ENCODE measurements at regions of chr12 and their contacts with region 1.

Region 1: GRCh38 chr12:116737774-116738700 is at the starts of genes RNFT2 and SPRING1:
- DNase-seq: peak; percentile 100
- H3K4me3 Mint-ChIP-seq: peak within 1 kb of the TSS; percentile 87
- H3K27ac Mint-ChIP-seq: peak within 1 kb of the TSS; percentile 89
- H3K4me1 Mint-ChIP-seq: peaks cover 13% of the 10 kb centered on the region
- H3K27me3 Mint-ChIP-seq: no peaks in the 10 kb centered on the region
- total RNA-seq, gene RNFT2: 10.1 and 11.6 TPM in 2 replicates
- total RNA-seq, gene SPRING1: 28.6 and 29.2 TPM in 2 replicates

Region 2: GRCh38 chr12:116818948-116819832 is 81.2 kb after region 1 on chr12:
- intact Hi-C with region 1: loop called (anchors 1 kb)
- DNase-seq: peak; percentile 97
- H3K4me3 Mint-ChIP-seq: peak overlapping the region; percentile 96
- H3K27ac Mint-ChIP-seq: peak overlapping the region; percentile 98
- H3K4me1 Mint-ChIP-seq: peaks cover 22% of the 10 kb centered on the region
- H3K27me3 Mint-ChIP-seq: peaks cover 12% of the 10 kb centered on the region

Region 3: GRCh38 chr12:116955382-116956021 is 217.5 kb after region 1 on chr12:
- intact Hi-C with region 1: loop called (anchors 5 kb)
- DNase-seq: peak; percentile 70
- H3K4me3 Mint-ChIP-seq: no peak overlapping the region
- H3K27ac Mint-ChIP-seq: no peak overlapping the region
- H3K4me1 Mint-ChIP-seq: peaks cover 19% of the 10 kb centered on the region
- H3K27me3 Mint-ChIP-seq: no peaks in the 10 kb centered on the region

Region 4: DNA sequence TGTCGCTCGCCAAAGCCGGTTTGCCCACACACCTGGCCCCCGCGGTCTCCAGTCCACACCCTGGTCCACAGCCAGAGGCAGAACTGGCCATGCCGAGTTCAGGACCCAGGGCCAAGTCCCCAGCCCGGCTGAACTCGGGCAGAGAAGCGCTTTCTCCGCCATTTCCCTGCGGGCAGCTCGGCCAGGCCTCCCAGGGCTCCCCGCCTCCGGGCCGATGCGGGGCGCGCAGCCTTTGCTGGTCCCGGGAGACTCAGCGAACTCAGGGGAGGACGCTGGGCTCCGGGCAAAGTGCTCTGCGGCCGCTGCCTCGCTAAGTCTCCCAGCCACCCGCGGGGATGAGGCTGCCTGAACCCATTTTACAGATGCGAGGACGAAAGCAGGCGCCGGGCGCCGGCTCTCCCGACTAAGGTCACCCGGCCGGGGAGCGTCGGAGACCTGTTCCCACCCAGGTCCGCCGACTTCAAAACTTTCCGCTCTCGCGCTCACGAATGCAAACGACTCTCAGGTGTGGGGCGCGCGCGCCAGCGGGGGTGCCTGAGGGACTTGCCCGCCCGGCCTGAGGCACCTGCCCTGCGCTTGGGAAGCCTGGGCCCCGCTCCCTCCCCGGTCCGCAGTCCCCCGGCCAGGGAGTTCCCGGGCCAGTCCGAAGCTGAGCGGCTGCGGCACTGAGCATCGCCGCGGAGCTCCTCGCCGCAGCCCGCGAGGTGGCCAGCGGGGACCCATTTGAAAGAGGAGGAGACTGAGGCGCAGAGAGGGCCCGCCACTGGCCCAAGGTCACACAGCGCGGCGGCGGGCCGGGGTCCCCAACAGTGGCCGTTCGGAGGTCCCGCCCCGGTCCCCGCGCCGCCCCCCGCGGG is 360.6 kb after region 1 on chr12:
- intact Hi-C with region 1: loop called (anchors 5 kb)
- DNase-seq: peak; percentile 79
- H3K4me3 Mint-ChIP-seq: peak overlapping the region; percentile 82
- H3K27ac Mint-ChIP-seq: peak overlapping the region; percentile 53
- H3K4me1 Mint-ChIP-seq: peaks cover 25% of the 10 kb centered on the region
- H3K27me3 Mint-ChIP-seq: peaks cover 25% of the 10 kb centered on the region

Region 5: GRCh38 chr12:117190210-117190781 is 452.3 kb after region 1 on chr12 and contains the start of gene FBXO21:
- intact Hi-C with region 1: loop called (anchors 2 kb)
- DNase-seq: peak; percentile 98
- H3K4me3 Mint-ChIP-seq: peak within 1 kb of the TSS; percentile 94
- H3K27ac Mint-ChIP-seq: peak within 1 kb of the TSS; percentile 75
- H3K4me1 Mint-ChIP-seq: peaks cover 23% of the 10 kb centered on the region
- H3K27me3 Mint-ChIP-seq: peaks cover 15% of the 10 kb centered on the region
- total RNA-seq, gene FBXO21: 28.0 and 28.1 TPM in 2 replicates

Measured in activated CD4-positive, alpha-beta T cell treated with anti-CD3 and anti-CD28 coated beads, Interleukin-2, amount 10 ng/mL, durations not matched to agents 24 days and 14 days (primary cell).